ENCODE measurements at regions of chr15 and their contacts with region 1.

Region 1: GRCh38 chr15:40857601-40858341 is 13.9 kb downstream of the SPINT1 start:
- DNase-seq: peak; percentile 80
- H3K4me3 Mint-ChIP-seq: no peak overlapping the region
- H3K27ac Mint-ChIP-seq: no peak overlapping the region
- H3K4me1 Mint-ChIP-seq: peaks cover 22% of the 10 kb centered on the region
- H3K27me3 Mint-ChIP-seq: no peaks in the 10 kb centered on the region
- CTCF ChIP-seq: peak; percentile 89

Region 2: GRCh38 chr15:40743921-40744814 is 113.6 kb before region 1 on chr15:
- CTCF ChIA-PET with region 1: interaction called, 8 read pairs
- POLR2A ChIA-PET with region 1: interaction called, 3 read pairs
- intact Hi-C with region 1: loop called (anchors 5 kb)
- DNase-seq: peak; percentile 88
- H3K4me3 Mint-ChIP-seq: no peak overlapping the region
- H3K27ac Mint-ChIP-seq: peak overlapping the region; percentile 33
- H3K4me1 Mint-ChIP-seq: peaks cover 7% of the 10 kb centered on the region
- H3K27me3 Mint-ChIP-seq: no peaks in the 10 kb centered on the region
- CTCF ChIP-seq: no peak

Region 3: DNA sequence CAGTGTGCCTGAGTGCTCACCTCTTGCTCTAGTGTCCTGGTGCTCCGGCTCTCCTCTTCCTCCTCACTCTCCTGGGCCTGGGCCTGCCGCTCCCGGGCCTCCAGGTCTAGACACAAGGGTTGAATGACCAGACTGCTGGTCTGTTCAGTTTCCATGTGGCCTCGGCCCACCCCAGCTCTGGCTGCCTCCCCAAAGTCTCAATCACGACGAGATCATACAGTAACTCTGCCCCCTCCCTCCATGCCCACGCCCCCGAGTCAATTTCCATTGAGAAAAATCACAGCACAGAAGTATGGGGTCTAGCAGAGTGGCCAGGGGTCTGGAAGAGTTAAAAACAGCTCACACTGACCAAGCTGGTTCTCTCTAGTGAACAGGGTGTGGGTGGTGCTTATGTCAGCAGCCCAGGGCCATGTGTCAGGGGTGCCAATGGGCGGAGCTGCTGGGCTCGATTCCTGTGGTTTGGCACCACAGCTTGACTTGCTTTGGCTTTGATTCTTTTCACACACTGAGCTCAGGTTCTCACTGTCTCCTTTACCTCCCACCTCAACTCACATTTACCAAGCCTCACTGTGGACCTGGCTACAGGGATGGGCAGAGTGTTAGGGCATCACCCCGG is 81.1 kb before region 1 on chr15:
- CTCF ChIA-PET with region 1: interaction called, 11 read pairs
- POLR2A ChIA-PET with region 1: no interaction called
- intact Hi-C with region 1: no loop called
- DNase-seq: peak; percentile 96
- H3K4me3 Mint-ChIP-seq: peak overlapping the region; percentile 57
- H3K27ac Mint-ChIP-seq: peak overlapping the region; percentile 72
- H3K4me1 Mint-ChIP-seq: peaks cover 12% of the 10 kb centered on the region
- H3K27me3 Mint-ChIP-seq: no peaks in the 10 kb centered on the region
- CTCF ChIP-seq: no peak

Region 4: GRCh38 chr15:40793216-40793989 is 64.4 kb before region 1 on chr15:
- CTCF ChIA-PET with region 1: interaction called, 10 read pairs
- POLR2A ChIA-PET with region 1: no interaction called
- intact Hi-C with region 1: no loop called
- DNase-seq: peak; percentile 99
- H3K4me3 Mint-ChIP-seq: no peak overlapping the region
- H3K27ac Mint-ChIP-seq: peak overlapping the region; percentile 70
- H3K4me1 Mint-ChIP-seq: peaks cover 33% of the 10 kb centered on the region
- H3K27me3 Mint-ChIP-seq: no peaks in the 10 kb centered on the region
- CTCF ChIP-seq: no peak

Region 5: GRCh38 chr15:40847205-40847961 is 10.4 kb before region 1 on chr15:
- CTCF ChIA-PET with region 1: interaction called, 130 read pairs
- POLR2A ChIA-PET with region 1: interaction called, 31 read pairs
- intact Hi-C with region 1: no loop called
- DNase-seq: peak; percentile 69
- H3K4me3 Mint-ChIP-seq: peak overlapping the region; percentile 96
- H3K27ac Mint-ChIP-seq: peak overlapping the region; percentile 46
- H3K4me1 Mint-ChIP-seq: peaks cover 29% of the 10 kb centered on the region
- H3K27me3 Mint-ChIP-seq: no peaks in the 10 kb centered on the region
- CTCF ChIP-seq: no peak

Region 6: DNA sequence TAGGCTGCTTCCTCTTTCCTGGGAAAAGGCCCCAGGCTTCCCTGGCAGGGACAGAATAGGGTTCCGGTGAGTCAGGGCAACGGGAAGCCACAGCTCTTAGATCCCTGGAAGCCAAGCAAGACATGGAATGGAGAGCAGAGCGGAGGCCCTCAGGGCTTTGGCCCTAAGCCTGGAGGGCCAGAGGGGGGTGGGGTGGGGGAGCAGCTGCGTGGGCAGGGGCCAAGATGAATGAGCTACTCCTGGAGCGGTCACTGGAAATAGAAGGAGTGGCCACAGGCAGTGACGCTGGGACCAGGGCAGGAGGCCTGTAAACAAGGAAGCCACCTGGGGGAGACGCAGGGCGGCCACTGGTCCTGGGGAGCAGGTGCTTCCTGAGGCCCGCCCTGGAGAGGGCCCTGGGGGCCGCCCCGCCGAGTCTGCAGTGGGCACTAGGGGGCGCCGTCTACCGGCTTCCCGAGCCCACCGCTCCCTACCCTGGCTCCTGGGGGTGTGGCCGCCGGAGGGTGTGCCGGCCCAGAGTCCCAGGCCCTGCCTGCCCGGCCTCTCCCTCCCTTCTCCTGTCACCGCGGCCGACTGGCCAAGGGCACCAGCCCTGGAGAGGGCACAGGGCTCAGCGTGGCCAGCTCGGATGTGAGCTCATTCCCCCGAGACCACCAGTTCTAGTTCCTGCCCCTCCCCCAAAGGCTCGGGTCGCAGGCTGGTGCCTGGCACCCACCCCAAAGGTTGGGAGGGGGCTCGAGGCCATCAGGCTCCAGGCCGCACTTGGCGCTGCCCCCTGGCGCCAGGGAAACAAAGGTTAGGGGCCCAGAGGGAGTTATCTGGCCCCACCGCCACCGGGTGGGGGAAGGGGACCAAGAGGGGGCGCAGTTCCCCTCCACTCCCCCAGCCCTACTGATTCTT is 48.6 kb after region 1 on chr15:
- CTCF ChIA-PET with region 1: interaction called, 47 read pairs
- POLR2A ChIA-PET with region 1: no interaction called
- intact Hi-C with region 1: no loop called
- DNase-seq: peak; percentile 97
- H3K4me3 Mint-ChIP-seq: peak overlapping the region; percentile 10
- H3K27ac Mint-ChIP-seq: peak overlapping the region; percentile 51
- H3K4me1 Mint-ChIP-seq: peaks cover 35% of the 10 kb centered on the region
- H3K27me3 Mint-ChIP-seq: no peaks in the 10 kb centered on the region
- CTCF ChIP-seq: peak; percentile 71

Region 7: GRCh38 chr15:40949756-40950207 is 92.0 kb after region 1 on chr15:
- CTCF ChIA-PET with region 1: no interaction called
- POLR2A ChIA-PET with region 1: no interaction called
- intact Hi-C with region 1: no loop called
- DNase-seq: peak; percentile 40
- H3K4me3 Mint-ChIP-seq: no peak overlapping the region
- H3K27ac Mint-ChIP-seq: no peak overlapping the region
- H3K4me1 Mint-ChIP-seq: peaks cover 13% of the 10 kb centered on the region
- H3K27me3 Mint-ChIP-seq: no peaks in the 10 kb centered on the region
- CTCF ChIP-seq: no peak

Region 8: DNA sequence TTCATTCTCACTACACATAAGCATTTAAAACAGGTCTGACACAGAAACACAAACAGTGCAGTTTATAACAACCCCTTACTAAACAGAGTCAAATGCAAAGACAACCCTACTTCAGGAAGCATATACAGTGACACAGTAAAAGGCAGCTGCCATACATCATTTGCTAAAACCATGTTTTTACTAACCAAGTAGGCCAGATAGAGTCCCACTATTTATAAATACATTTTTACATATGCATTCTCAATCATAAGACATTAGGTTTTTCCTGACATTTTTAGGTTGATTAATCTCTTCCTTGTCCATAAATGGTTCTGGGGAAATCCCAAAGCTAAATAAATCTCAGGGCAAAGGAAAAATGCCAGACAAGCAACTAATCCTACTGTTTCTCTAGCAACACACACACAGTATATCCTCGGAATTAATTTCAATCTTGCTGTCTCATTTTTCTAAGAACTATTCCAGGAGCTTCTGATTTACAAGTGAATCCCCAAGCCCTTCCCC is 134.5 kb after region 1 on chr15:
- CTCF ChIA-PET with region 1: no interaction called
- POLR2A ChIA-PET with region 1: no interaction called
- intact Hi-C with region 1: no loop called
- DNase-seq: no peak
- H3K4me3 Mint-ChIP-seq: no peak overlapping the region
- H3K27ac Mint-ChIP-seq: no peak overlapping the region
- H3K4me1 Mint-ChIP-seq: peaks cover 5% of the 10 kb centered on the region
- H3K27me3 Mint-ChIP-seq: no peaks in the 10 kb centered on the region
- CTCF ChIP-seq: no peak